ENCODE measurements at regions of chr4 and their contacts with region 1.

Region 1: GRCh38 chr4:145618932-145619638 is at the start of gene MMAA:
- DNase-seq: peak; percentile 93 to 94
- ATAC-seq: peak; percentile 92 to 95
- H3K4me3 ChIP-seq: peak within 1 kb of the TSS; percentile 72 to 98 (median 88)
- H3K27ac ChIP-seq: peak within 1 kb of the TSS; percentile 92 to 99 (median 98)
- H3K4me1 ChIP-seq: peaks cover 16 to 24% of the 10 kb centered on the region in 2 donors
- H3K27me3 ChIP-seq: no peaks in the 10 kb centered on the region
- CTCF ChIP-seq: peak; percentile 35 to 76 (median 63)
- POLR2A ChIP-seq: peak; percentile 96 to 97
- total RNA-seq, gene MMAA: 5.1 to 10.9 (median 8.4) TPM

Region 2: GRCh38 chr4:145154573-145154972 is 464.5 kb before region 1 on chr4:
- in situ Hi-C with region 1: no loop called
- intact Hi-C with region 1: loop called (anchors 5 kb)
- DNase-seq: no peak
- ATAC-seq: peak; percentile 66 to 82
- H3K4me3 ChIP-seq: no peak overlapping the region
- H3K27ac ChIP-seq: peak overlapping the region; percentile 65 to 73 (median 68)
- H3K4me1 ChIP-seq: peaks cover 13 to 22% of the 10 kb centered on the region in 2 donors
- H3K27me3 ChIP-seq: no peaks in the 10 kb centered on the region
- CTCF ChIP-seq: peak; percentile 25 to 70 (median 36)
- POLR2A ChIP-seq: no peak

Region 3: GRCh38 chr4:145216535-145216934 is 402.6 kb before region 1 on chr4:
- in situ Hi-C with region 1: no loop called
- intact Hi-C with region 1: loop called (anchors 5 kb)
- DNase-seq: no peak
- ATAC-seq: no peak
- H3K4me3 ChIP-seq: no peak overlapping the region
- H3K27ac ChIP-seq: no peak overlapping the region
- H3K4me1 ChIP-seq: peaks cover 0 to 6% of the 10 kb centered on the region in 2 donors
- H3K27me3 ChIP-seq: no peaks in the 10 kb centered on the region
- CTCF ChIP-seq: peak in 3 of 5 experiments; percentile 29 to 43 (median 35)
- POLR2A ChIP-seq: no peak

Region 4: GRCh38 chr4:145552181-145552822 is 66.8 kb before region 1 on chr4:
- in situ Hi-C with region 1: no loop called
- intact Hi-C with region 1: no loop called
- DNase-seq: no peak
- ATAC-seq: no peak
- H3K4me3 ChIP-seq: no peak overlapping the region
- H3K27ac ChIP-seq: peak overlapping the region; percentile 27 to 38 (median 30)
- H3K4me1 ChIP-seq: peaks cover 0 to 5% of the 10 kb centered on the region in 2 donors
- H3K27me3 ChIP-seq: no peaks in the 10 kb centered on the region
- CTCF ChIP-seq: no peak
- POLR2A ChIP-seq: no peak

Region 5: DNA sequence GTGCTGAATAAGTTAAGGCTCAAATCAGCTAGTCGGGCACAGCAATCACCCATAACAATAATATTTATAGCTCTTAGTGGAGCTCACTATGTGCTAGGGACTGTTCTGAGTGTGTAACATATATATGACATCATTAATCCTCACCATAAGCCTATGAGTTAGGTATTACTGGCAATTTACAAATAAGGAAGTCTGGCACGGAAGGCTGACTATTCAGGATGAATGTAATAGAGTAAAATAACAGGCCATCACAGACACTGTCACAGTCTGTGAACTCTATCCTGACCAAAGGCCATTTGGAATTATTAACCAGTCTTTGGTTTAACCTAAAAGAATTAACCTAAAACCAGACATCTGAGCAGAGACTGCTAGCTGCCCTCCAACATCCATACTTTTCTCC is 180.1 kb after region 1 on chr4:
- in situ Hi-C with region 1: no loop called
- intact Hi-C with region 1: loop called (anchors 10 kb)
- DNase-seq: no peak
- ATAC-seq: no peak
- H3K4me3 ChIP-seq: no peak overlapping the region
- H3K27ac ChIP-seq: peak overlapping the region; percentile 82 to 90 (median 86)
- H3K4me1 ChIP-seq: peaks cover 45 to 48% of the 10 kb centered on the region in 2 donors
- H3K27me3 ChIP-seq: no peaks in the 10 kb centered on the region
- CTCF ChIP-seq: no peak
- POLR2A ChIP-seq: no peak

Region 6: DNA sequence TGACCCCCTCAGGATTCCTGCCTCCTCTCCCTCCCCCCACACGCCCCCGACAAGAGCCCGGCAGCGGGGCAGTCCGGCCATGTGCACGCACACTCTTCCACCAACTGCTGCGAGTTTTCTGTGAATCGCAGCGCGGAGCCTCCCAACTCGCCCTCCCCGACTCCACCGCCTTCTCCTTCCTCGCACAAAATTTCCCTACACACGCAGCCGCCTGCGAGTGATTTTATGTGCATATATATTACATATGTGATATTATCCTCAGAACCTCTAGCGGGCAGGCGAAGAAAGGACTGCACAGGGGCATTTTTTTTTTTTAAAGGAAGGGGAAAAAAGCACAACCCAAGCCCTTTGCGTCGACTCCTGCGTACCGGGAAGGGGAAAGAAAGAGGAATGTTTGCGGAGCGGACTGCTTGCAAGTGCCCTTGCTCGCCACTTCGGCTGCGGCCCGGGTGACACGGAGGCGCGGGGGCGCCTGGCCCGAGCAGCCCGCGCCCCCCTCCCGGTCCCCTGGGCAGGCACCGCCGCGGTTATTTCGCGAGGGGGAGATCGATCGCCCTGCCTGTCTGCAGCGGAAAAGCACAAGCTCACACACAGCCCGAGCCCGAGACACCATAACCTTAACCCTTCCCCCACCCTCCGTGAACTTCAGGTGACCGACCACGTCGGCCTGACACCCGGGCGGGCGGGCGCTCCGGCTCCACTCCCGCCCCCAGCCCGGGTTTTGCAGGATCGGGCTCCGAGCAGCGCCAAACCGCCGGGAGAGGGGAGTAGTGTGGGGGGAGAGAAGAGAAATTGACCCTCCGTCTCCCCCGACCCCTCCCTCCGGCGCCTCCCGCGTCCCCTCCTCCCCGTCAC is 317.3 kb after region 1 on chr4:
- in situ Hi-C with region 1: no loop called
- intact Hi-C with region 1: loop called (anchors 5 kb)
- DNase-seq: peak; percentile 56 to 79
- ATAC-seq: peak; percentile 67 to 73
- H3K4me3 ChIP-seq: peak overlapping the region; percentile 71 to 90 (median 84)
- H3K27ac ChIP-seq: peak overlapping the region; percentile 91 to 99 (median 94)
- H3K4me1 ChIP-seq: peaks cover 25 to 34% of the 10 kb centered on the region in 2 donors
- H3K27me3 ChIP-seq: no peaks in the 10 kb centered on the region
- CTCF ChIP-seq: peak in 4 of 5 experiments; percentile 23 to 41 (median 34)
- POLR2A ChIP-seq: peak in 1 of 2 donors; percentile 53